HEK293 (cell line): ENCODE measurements at regions of chr20 and their contacts with region 1.

Region 1: DNA sequence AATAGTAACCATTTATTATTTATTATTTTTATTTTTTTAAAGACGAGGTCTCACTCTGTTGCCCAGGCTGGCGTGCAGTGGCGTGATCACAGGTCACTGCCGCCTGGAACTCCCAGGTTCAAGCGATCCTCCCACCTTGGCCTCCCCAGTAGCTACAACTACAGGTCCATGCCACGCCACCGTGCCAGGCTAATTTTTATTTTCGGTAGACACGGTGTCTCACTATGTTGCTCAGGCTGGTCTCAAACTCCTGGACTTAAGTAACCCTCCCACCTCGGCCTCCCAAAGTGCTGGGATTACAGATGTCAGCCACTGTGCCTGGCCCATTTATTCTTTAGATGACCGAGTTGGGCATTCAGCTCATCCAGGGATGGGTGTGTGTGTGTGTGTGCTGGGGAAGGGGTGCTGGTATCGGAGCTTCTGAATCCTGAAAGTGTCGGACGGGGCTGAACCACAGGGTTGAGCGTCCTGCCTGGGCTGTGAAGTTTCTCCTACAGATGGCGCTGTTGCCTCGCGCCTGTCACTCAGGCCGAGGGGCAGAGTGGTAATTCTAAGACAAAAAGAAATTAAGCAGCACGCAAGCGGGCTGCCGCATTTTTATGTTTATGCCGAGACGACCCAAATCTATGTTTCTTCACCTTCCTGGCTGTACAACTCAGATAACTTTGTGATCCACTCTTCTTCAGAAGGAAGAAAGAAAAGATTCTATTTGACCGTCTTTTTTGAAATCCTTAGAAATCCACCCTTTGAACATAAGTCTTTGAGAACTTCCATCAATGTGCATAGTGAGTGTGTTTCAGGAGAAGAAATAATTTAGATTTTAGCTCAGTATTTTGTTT is 252.8 kb downstream of the CDH26 start:
- H3K4me3 ChIP-seq: no peak overlapping the region
- H3K27ac ChIP-seq: no peak overlapping the region
- H3K4me1 ChIP-seq: no peaks in the 10 kb centered on the region
- CTCF ChIP-seq: peak; percentile 82

Region 2: GRCh38 chr20:60057123-60057801 is 153.7 kb before region 1 on chr20:
- CTCF ChIA-PET with region 1: interaction called, 22 read pairs
- POLR2A ChIA-PET with region 1: no interaction called
- H3K4me3 ChIP-seq: no peak overlapping the region
- H3K27ac ChIP-seq: peak overlapping the region; percentile 89; the same call in 1 of the 2 replicates
- H3K4me1 ChIP-seq: peaks cover 6% of the 10 kb centered on the region; the same call in 1 of the 2 replicates
- CTCF ChIP-seq: peak; percentile 74

Region 3: DNA sequence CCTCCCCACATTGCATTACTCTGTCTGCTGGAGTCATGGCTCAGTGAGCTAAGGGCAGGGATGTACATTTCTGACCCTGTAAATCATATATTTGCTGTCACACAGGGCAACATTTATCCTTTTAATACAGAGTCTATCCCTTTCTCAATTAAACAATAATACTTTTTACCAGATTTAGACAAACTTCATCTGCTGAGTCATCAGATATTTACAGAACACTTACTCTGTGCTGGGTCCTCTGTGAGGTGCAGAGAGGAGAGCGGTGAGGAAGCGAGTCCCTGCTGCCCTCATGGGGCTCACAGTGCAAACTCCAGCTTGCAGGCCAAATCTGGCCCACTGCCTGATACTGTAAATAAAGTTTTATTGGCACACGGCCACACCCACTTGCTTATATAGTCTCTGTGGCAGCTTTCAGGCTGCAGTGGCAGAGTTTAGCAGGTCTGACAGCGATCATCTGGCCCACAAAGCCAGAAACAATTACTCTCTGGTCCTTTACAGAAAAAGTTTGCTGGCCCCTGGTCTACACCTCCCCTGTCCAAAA is 108.3 kb before region 1 on chr20:
- CTCF ChIA-PET with region 1: no interaction called
- POLR2A ChIA-PET with region 1: no interaction called
- H3K4me3 ChIP-seq: no peak overlapping the region
- H3K27ac ChIP-seq: no peak overlapping the region
- H3K4me1 ChIP-seq: no peaks in the 10 kb centered on the region
- CTCF ChIP-seq: no peak

Region 4: GRCh38 chr20:60192326-60192725 is 18.7 kb before region 1 on chr20:
- CTCF ChIA-PET with region 1: interaction called, 14 read pairs
- POLR2A ChIA-PET with region 1: no interaction called
- H3K4me3 ChIP-seq: no peak overlapping the region
- H3K27ac ChIP-seq: no peak overlapping the region
- H3K4me1 ChIP-seq: no peaks in the 10 kb centered on the region
- CTCF ChIP-seq: no peak

Region 5: GRCh38 chr20:60262967-60263603 is 52.1 kb after region 1 on chr20:
- CTCF ChIA-PET with region 1: interaction called, 27 read pairs
- POLR2A ChIA-PET with region 1: no interaction called
- H3K4me3 ChIP-seq: no peak overlapping the region
- H3K27ac ChIP-seq: no peak overlapping the region
- H3K4me1 ChIP-seq: no peaks in the 10 kb centered on the region
- CTCF ChIP-seq: peak; percentile 37

Region 6: GRCh38 chr20:60292001-60292520 is 81.1 kb after region 1 on chr20:
- CTCF ChIA-PET with region 1: no interaction called
- POLR2A ChIA-PET with region 1: no interaction called
- H3K4me3 ChIP-seq: no peak overlapping the region
- H3K27ac ChIP-seq: no peak overlapping the region
- H3K4me1 ChIP-seq: no peaks in the 10 kb centered on the region
- CTCF ChIP-seq: no peak

Region 7: DNA sequence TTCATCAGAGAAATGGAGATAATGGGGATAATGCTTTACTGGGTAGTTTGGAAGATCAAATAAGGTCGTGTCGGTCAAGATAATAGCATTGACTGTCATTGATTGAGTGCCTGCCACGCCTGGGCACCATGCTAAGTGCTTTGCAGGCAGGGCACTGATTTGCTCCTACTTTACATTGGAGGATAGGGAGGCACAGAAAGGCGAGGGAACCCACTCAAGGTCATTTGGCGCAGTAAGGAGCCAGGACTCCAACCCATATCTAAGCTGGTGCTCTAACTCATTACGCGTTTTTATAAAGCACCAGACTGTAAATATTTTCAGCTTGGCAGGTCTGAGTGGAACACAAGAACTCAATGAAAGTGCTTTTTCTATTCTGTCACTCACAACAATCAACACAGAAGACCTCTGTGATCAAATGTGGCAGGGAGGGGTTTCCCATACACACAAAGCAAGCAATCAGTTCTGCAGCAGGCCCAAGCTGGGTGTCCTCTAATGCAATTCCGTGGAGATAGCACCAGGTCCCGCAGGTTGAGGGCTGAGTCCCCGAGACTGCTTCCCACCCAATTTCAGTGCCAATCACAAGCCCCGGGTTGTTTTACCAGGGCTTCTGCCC is 120.8 kb after region 1 on chr20:
- CTCF ChIA-PET with region 1: no interaction called
- POLR2A ChIA-PET with region 1: no interaction called
- H3K4me3 ChIP-seq: no peak overlapping the region
- H3K27ac ChIP-seq: no peak overlapping the region
- H3K4me1 ChIP-seq: no peaks in the 10 kb centered on the region
- CTCF ChIP-seq: no peak